ENCODE measurements at regions of chr12 and their contacts with region 1.

Region 1: DNA sequence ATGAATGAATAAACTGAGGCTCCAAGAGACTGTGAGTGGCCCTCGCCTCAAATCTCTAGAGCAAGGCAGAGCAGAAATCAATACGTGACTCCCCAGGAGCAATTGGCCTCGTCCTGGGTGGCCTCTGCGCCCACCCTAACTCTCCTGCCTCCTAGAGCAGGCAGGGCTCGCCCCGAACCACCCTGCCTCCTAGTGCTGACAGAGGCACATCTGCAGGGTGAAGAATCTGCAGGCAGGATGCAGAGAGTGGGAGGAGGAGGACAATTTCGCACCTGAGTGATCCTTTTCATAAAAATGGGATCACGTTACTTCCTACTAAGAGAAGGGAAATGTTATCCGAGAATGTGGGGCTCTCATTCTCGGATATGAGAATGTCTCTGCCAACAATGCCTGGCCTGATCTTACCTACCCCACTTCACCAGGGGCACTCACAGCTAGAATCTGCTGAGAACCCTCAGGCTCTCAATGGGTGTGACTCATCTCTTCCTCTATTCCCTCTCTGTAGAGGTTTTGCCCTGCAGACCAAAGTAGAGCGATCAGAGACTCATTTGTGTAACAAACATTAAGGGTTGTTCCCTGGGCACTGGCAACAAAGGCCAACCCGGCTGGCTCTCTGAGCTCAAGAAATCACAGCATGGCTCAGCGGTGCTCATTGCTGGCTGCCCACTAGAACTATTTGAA is 61.7 kb upstream of the BCL2L14 start:
- DNase-seq: no peak
- ATAC-seq: peak; percentile 60
- H3K4me3 Mint-ChIP-seq: peak overlapping the region; percentile 78
- H3K27ac Mint-ChIP-seq: peak overlapping the region; percentile 81
- H3K4me1 Mint-ChIP-seq: peaks cover 60% of the 10 kb centered on the region
- H3K27me3 Mint-ChIP-seq: no peaks in the 10 kb centered on the region
- CTCF ChIP-seq: no peak

Region 2: GRCh38 chr12:11891754-11892386 is 117.2 kb before region 1 on chr12:
- CTCF ChIA-PET with region 1: no interaction called
- POLR2A ChIA-PET with region 1: interaction called, 13 read pairs
- intact Hi-C with region 1: loop called (anchors 10 kb)
- DNase-seq: no peak
- ATAC-seq: no peak
- H3K4me3 Mint-ChIP-seq: no peak overlapping the region
- H3K27ac Mint-ChIP-seq: peak overlapping the region; percentile 18
- H3K4me1 Mint-ChIP-seq: peaks cover 45% of the 10 kb centered on the region
- H3K27me3 Mint-ChIP-seq: no peaks in the 10 kb centered on the region
- CTCF ChIP-seq: no peak

Region 3: GRCh38 chr12:12024911-12025682 is 16.0 kb after region 1 on chr12:
- CTCF ChIA-PET with region 1: no interaction called
- POLR2A ChIA-PET with region 1: interaction called, 4 read pairs
- intact Hi-C with region 1: loop called (anchors 1 kb)
- DNase-seq: no peak
- ATAC-seq: peak; percentile 75
- H3K4me3 Mint-ChIP-seq: peak overlapping the region; percentile 33
- H3K27ac Mint-ChIP-seq: peak overlapping the region; percentile 72
- H3K4me1 Mint-ChIP-seq: peaks cover 40% of the 10 kb centered on the region
- H3K27me3 Mint-ChIP-seq: no peaks in the 10 kb centered on the region
- CTCF ChIP-seq: no peak

Measured in activated B cell treated with CpG ODN at 0.5 μM for 24 hours (primary cell).